ENCODE measurements at regions of chr1 and their contacts with region 1.

Region 1: DNA sequence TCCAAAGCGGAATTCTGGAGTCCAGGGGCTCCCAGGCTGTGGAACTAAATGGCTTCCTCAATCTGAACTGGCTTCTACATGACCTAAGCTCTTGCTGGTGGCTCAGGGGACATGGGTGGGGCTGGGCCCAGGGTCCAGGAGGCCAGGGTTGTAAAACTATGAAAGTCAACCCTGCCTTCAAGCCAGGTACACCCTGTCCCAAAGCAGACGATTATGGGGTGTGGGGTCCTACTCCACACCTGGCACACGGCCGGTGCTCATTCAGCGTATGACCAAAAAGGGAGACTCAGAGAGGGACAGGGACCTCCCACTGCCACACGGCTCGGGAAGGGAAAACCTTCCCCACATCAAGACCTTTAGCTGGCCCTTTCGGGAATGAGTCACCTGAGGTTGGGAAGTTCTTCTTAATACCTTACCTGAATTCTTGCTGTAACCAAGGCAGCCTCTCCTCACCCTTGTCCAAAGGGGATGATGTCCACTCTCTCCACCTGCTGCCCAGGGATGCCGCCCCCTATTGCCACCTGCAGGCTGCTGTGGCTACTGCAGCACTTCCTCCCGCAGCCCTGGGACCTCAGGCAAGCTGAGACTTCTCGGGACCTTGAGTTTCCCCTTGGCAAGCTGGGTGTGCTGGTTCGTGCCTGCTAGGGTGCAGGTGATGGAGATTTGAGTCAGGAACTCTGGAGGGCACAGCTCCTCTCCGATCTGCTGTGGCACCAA is 32.2 kb downstream of the RUNX3 start:
- DNase-seq: peak; percentile 46
- H3K4me3 ChIP-seq: no peak overlapping the region
- H3K27ac ChIP-seq: no peak overlapping the region
- H3K4me1 ChIP-seq: no peaks in the 10 kb centered on the region
- H3K27me3 ChIP-seq: peaks cover 0 to 5% of the 10 kb centered on the region in 2 experiments
- CTCF ChIP-seq: peak; percentile 79 to 93
- POLR2A ChIP-seq: no peak

Region 2: DNA sequence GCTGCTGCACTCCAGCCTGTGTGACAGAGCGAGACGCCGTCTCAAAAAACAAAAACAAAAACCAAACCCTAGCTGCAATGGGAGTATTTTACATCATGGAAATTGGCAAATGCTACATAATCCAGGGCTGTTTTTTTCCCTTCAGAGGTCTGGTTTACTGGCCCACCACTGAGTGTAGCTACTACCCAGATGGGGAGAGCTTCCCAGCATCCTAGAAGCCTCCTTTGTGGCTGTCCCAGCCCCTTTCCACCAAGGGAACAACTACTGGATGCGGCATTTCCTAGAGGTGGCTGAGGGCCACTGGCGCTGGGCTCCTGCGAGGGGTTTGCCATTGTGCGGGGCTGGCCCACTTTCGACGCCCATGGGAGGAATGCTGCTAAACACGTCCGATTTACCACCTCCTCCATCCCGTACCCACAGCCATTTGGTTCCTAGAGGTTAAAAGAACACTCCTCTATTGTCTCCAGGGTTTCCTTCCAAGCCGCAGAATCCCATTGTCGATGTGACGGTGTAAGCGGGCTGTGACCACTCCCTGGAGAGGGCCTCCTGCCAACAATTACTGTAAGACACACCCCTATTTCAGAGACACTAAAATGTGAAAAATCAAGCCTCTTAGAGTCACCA is 23.2 kb before region 1 on chr1:
- CTCF ChIA-PET with region 1: no interaction called
- POLR2A ChIA-PET with region 1: no interaction called
- dilution Hi-C with region 1: no loop called
- intact Hi-C with region 1: no loop called
- DNase-seq: no peak
- H3K4me3 ChIP-seq: no peak overlapping the region
- H3K27ac ChIP-seq: no peak overlapping the region
- H3K4me1 ChIP-seq: no peaks in the 10 kb centered on the region
- H3K27me3 ChIP-seq: peaks cover 7 to 22% of the 10 kb centered on the region in 2 experiments
- CTCF ChIP-seq: no peak
- POLR2A ChIP-seq: no peak

Region 3: GRCh38 chr1:24909388-24909898 is 11.5 kb after region 1 on chr1:
- CTCF ChIA-PET with region 1: interaction called, 24 read pairs
- POLR2A ChIA-PET with region 1: no interaction called
- dilution Hi-C with region 1: no loop called
- intact Hi-C with region 1: no loop called
- DNase-seq: peak; percentile 69
- H3K4me3 ChIP-seq: no peak overlapping the region
- H3K27ac ChIP-seq: no peak overlapping the region
- H3K4me1 ChIP-seq: no peaks in the 10 kb centered on the region
- H3K27me3 ChIP-seq: no peaks in the 10 kb centered on the region
- CTCF ChIP-seq: peak; percentile 59 to 79
- POLR2A ChIP-seq: no peak

Measured in endothelial cell of umbilical vein (primary cell).